Heart right ventricle (tissue), 16 donors: ENCODE measurements at regions of chr22 and their contacts with region 1.

Region 1: DNA sequence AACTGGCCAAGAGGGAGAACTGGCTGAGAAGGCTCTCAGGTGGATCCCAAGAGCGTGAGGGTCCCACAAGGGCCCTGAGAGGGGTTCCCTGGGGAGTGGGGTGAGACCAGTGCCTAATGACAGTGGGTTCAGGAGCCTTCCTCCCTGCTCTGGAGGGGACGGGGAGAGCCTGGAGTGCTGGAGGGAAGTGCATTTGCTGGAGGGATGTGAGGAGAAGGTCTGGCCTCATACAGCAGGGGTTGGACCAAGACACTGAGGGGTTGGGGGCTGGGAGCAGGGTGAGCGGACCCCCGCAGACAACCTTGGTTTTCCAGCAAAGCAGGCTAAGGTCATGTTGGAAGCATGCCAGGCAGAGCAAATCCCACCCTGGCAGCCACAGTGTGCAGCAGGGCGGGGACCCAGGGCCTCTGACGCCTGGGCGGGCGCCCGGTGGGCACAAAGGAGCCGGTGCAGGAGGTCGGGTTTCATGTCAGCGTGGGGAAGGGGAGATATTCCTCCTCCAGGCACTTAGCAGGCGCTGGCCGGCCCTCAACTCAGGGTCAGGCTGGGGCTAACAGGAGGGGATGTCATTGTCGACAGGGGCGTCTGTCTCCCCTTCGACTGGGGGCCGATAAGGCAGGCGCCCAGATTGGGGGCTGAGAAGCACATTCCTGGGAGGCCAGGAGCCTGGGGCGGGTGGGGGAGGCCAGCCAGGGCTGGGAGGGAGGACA is 3.1 kb upstream of the DERL3 start:
- DNase-seq: no peak
- ATAC-seq: no peak
- H3K4me3 ChIP-seq: no peak overlapping the region
- H3K27ac ChIP-seq: no peak overlapping the region
- H3K4me1 ChIP-seq: peaks cover 25 to 67% (median 51%) of the 10 kb centered on the region in 9 donors
- H3K27me3 ChIP-seq: no peaks in the 10 kb centered on the region
- CTCF ChIP-seq: no peak

Region 2: GRCh38 chr22:23759566-23759965 is 82.3 kb before region 1 on chr22:
- intact Hi-C with region 1: no loop called
- DNase-seq: no peak
- ATAC-seq: no peak
- H3K4me3 ChIP-seq: no peak overlapping the region
- H3K27ac ChIP-seq: no peak overlapping the region
- H3K4me1 ChIP-seq: peaks cover 2 to 25% (median 21%) of the 10 kb centered on the region in 9 donors
- H3K27me3 ChIP-seq: no peaks in the 10 kb centered on the region
- CTCF ChIP-seq: no peak

Region 3: DNA sequence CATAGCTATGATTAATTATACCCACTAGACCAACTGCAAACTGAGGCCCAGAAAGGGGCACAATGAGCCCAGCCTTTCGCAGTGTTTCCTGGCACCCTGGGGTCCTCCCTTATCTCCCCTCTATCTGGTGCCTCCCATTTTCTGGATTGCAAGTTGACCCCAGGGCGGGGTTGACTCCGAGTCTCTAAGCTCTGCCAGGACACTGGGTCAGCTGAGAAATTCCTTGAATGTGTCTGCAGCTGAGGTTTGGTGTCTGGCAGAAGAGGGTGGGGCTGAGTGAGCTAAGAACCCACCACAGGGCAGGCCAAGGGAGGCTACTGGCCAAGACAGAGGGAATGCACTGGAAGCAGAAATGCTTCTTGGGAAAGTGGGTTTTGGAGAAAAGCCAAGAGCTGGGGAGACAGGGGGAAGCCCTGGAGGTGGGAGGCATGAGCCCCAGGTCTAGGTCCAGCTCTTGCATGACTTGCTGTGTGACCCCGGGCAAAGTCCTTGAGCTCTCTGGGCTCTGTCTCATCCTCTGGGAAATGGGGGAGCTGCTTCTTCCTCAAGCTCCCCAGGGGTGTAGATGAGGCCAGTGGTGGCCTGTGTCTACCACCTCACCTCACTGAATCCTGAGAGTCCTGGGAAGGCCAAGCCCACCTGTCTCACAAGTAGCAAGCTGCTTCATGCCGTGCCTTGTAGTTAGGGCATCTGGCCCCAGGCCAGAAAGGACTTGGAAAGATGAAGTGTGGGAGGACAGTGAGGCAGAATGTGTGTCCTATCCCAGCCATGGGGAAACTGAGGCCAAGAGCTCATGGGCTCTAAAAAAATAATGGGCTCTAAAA is 66.9 kb before region 1 on chr22:
- intact Hi-C with region 1: loop called in 2 of 10 experiments (anchors 5 kb)
- DNase-seq: peak in 1 of 2 donors; percentile 3
- ATAC-seq: no peak
- H3K4me3 ChIP-seq: no peak overlapping the region
- H3K27ac ChIP-seq: no peak overlapping the region
- H3K4me1 ChIP-seq: peaks cover 4 to 51% (median 37%) of the 10 kb centered on the region in 9 donors
- H3K27me3 ChIP-seq: peaks cover 0 to 10% (median 0%) of the 10 kb centered on the region in 7 donors
- CTCF ChIP-seq: no peak

Region 4: DNA sequence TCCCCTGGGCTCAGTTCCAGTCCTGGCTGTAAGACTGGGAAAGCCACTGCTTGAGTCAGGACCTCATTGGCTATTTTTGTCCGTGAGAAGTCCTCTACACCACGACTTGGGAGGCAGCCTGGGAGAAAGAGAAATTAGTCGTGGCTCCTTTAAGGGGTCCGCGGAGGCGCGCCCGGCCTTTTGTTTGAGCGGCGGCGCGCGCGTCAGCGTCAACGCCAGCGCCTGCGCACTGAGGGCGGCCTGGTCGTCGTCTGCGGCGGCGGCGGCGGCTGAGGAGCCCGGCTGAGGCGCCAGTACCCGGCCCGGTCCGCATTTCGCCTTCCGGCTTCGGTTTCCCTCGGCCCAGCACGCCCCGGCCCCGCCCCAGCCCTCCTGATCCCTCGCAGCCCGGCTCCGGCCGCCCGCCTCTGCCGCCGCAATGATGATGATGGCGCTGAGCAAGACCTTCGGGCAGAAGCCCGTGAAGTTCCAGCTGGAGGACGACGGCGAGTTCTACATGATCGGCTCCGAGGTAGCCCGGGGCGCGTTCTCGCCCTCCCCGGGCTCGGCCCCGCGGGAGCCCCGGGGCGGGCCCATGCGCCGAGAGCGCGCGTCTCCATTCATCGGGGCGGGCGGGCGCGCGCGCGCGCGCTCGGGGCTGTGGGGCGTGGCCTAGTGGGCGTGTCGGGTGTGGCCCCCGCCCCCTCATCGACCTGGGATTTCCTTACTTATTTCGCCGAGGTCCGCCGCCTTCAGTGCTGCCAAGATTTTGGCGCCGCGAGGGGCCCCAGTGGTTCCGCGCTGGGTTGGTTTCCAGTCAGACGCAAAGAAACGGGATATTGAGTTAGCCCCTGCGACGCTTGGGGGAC is 54.9 kb before region 1 on chr22 and contains the start of gene SMARCB1:
- intact Hi-C with region 1: loop called in 1 of 10 experiments (anchors 5 kb)
- DNase-seq: peak; percentile 92 to 93
- ATAC-seq: peak; percentile 90 to 97 (median 95)
- H3K4me3 ChIP-seq: peak within 1 kb of the TSS; percentile 70 to 96 (median 88)
- H3K27ac ChIP-seq: peak within 1 kb of the TSS; percentile 98 to 100 (median 100)
- H3K4me1 ChIP-seq: peaks cover 14 to 59% (median 46%) of the 10 kb centered on the region in 9 donors
- H3K27me3 ChIP-seq: no peaks in the 10 kb centered on the region
- CTCF ChIP-seq: peak in 1 of 9 donors; percentile 8
- total RNA-seq, gene SMARCB1: 28.5 to 73.1 (median 39.8) TPM

Region 5: GRCh38 chr22:23913661-23914353 is 71.9 kb after region 1 on chr22:
- intact Hi-C with region 1: no loop called
- DNase-seq: peak; percentile 100
- ATAC-seq: peak; percentile 99 to 100 (median 100)
- H3K4me3 ChIP-seq: peak overlapping the region; percentile 22 to 66 (median 61)
- H3K27ac ChIP-seq: peak overlapping the region; percentile 77 to 93 (median 86)
- H3K4me1 ChIP-seq: peaks cover 5 to 26% (median 16%) of the 10 kb centered on the region in 9 donors
- H3K27me3 ChIP-seq: no peaks in the 10 kb centered on the region
- CTCF ChIP-seq: no peak